ENCODE measurements at regions of chr5 and their contacts with region 1.

Region 1: GRCh38 chr5:109409844-109410388 is at the start of gene PJA2:
- DNase-seq: peak; percentile 98 to 100 (median 99)
- ATAC-seq: peak; percentile 95 to 98 (median 96)
- H3K4me3 ChIP-seq: peak within 1 kb of the TSS; percentile 78 to 95 (median 88)
- H3K27ac ChIP-seq: peak within 1 kb of the TSS; percentile 93 to 100 (median 99)
- H3K4me1 ChIP-seq: peaks cover 9 to 54% (median 43%) of the 10 kb centered on the region in 12 donors
- H3K27me3 ChIP-seq: no peaks in the 10 kb centered on the region
- CTCF ChIP-seq: peak in 11 of 12 donors; percentile 24 to 64 (median 38)
- POLR2A ChIP-seq: peak in 1 of 2 donors; percentile 61
- total RNA-seq, gene PJA2: 62.0 to 108 (median 87.9) TPM

Region 2: GRCh38 chr5:108381954-108382783 is 1027.7 kb before region 1 on chr5 and contains the start of gene FBXL17:
- intact Hi-C with region 1: loop called in 1 of 10 experiments (anchors 10 kb)
- DNase-seq: peak; percentile 94 to 97 (median 96)
- ATAC-seq: peak; percentile 87 to 92 (median 88)
- H3K4me3 ChIP-seq: peak within 1 kb of the TSS; percentile 66 to 96 (median 92)
- H3K27ac ChIP-seq: peak within 1 kb of the TSS; percentile 95 to 100 (median 99)
- H3K4me1 ChIP-seq: peaks cover 0 to 25% (median 16%) of the 10 kb centered on the region in 12 donors
- H3K27me3 ChIP-seq: no peaks in the 10 kb centered on the region
- CTCF ChIP-seq: peak in 1 of 12 donors; percentile 24
- POLR2A ChIP-seq: peak in 1 of 2 donors; percentile 88
- total RNA-seq, gene FBXL17: 25.9 to 39.4 (median 33.6) TPM

Region 3: GRCh38 chr5:108727651-108728565 is 682.0 kb before region 1 on chr5:
- intact Hi-C with region 1: loop called in 2 of 10 experiments (anchors 10 kb)
- DNase-seq: peak; percentile 93 to 95 (median 93)
- ATAC-seq: peak; percentile 100
- H3K4me3 ChIP-seq: peak overlapping the region; percentile 40 to 95 (median 84)
- H3K27ac ChIP-seq: peak overlapping the region; percentile 72 to 95 (median 90)
- H3K4me1 ChIP-seq: peaks cover 0 to 33% (median 5%) of the 10 kb centered on the region in 12 donors
- H3K27me3 ChIP-seq: no peaks in the 10 kb centered on the region
- CTCF ChIP-seq: peak in 3 of 12 donors; percentile 10 to 38 (median 13)
- POLR2A ChIP-seq: peak in 1 of 2 donors; percentile 76

Region 4: GRCh38 chr5:108748401-108749127 is 661.4 kb before region 1 on chr5:
- intact Hi-C with region 1: loop called in 3 of 10 experiments (anchors 1 to 10 kb)
- DNase-seq: peak; percentile 99 to 100 (median 99)
- ATAC-seq: peak; percentile 98 to 99 (median 98)
- H3K4me3 ChIP-seq: peak overlapping the region; percentile 83 to 98 (median 91)
- H3K27ac ChIP-seq: peak overlapping the region; percentile 91 to 100 (median 97)
- H3K4me1 ChIP-seq: peaks cover 0 to 31% (median 8%) of the 10 kb centered on the region in 12 donors
- H3K27me3 ChIP-seq: no peaks in the 10 kb centered on the region
- CTCF ChIP-seq: peak in 7 of 12 donors; percentile 17 to 34 (median 21)
- POLR2A ChIP-seq: peak; percentile 89 to 99

Region 5: DNA sequence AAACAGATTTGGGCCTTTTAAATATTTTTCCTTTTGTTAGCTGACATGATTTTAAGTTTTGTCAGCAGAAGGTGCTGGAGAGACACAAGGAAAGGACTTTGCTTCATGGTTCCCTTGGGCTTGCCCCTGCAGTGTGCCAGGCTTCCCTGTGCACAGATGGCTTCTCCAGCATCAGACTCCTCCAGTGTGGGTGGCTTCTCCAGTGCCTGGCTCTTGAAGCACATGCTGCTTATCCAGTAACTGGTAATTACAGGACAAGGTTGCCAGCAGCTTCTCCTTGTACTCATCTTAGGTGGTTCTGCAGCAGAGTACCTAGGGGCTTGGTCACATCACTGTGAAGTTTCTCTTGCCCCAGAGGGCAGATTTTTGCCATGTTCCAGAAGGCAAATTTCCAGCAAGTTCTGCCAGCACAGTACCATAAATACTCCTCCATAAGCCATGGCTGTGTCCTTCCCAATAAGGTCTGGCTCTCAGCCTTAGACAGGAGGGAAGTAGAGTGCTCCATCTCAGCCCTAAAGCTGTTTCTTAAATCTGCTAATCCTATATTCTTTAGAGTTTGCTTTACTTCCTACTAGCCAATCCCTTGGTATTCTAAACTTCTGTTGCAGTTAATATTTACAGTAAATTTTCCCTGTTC is 62.5 kb before region 1 on chr5:
- intact Hi-C with region 1: loop called in 1 of 10 experiments (anchors 5 kb)
- DNase-seq: peak in 1 of 5 donors; percentile 38
- ATAC-seq: peak; percentile 61 to 79 (median 71)
- H3K4me3 ChIP-seq: no peak overlapping the region
- H3K27ac ChIP-seq: peak overlapping the region in 2 of 12 donors; percentile 22 to 55
- H3K4me1 ChIP-seq: peaks cover 0 to 36% (median 11%) of the 10 kb centered on the region in 12 donors
- H3K27me3 ChIP-seq: no peaks in the 10 kb centered on the region
- CTCF ChIP-seq: no peak
- POLR2A ChIP-seq: no peak

Region 6: DNA sequence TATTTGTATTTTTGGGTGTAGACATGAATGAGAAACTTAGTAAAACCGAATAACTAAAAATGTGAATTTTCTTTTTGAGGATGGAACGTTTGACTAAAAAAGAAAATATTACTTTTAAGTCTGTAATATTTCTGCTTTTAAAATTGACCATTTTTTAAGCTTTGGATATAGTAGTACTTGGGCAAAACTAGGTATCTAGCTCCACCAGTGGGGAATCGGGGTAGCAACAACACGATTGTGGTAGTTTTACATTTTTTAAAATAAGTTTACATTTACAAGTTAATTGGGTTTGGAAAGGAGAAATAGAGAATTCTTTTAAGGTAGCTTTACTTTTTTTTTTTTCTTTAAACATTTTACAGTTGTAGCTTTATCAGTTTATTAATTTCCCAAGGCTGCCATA is 434.2 kb after region 1 on chr5:
- intact Hi-C with region 1: no loop called
- DNase-seq: no peak
- ATAC-seq: no peak
- H3K4me3 ChIP-seq: no peak overlapping the region
- H3K27ac ChIP-seq: no peak overlapping the region
- H3K4me1 ChIP-seq: no peaks in the 10 kb centered on the region
- H3K27me3 ChIP-seq: no peaks in the 10 kb centered on the region
- CTCF ChIP-seq: peak in 6 of 12 donors; percentile 14 to 44 (median 27)
- POLR2A ChIP-seq: no peak